CD4-positive, alpha-beta memory T cell (primary cell): ENCODE measurements at regions of chr2 and their contacts with region 1.

Region 1: DNA sequence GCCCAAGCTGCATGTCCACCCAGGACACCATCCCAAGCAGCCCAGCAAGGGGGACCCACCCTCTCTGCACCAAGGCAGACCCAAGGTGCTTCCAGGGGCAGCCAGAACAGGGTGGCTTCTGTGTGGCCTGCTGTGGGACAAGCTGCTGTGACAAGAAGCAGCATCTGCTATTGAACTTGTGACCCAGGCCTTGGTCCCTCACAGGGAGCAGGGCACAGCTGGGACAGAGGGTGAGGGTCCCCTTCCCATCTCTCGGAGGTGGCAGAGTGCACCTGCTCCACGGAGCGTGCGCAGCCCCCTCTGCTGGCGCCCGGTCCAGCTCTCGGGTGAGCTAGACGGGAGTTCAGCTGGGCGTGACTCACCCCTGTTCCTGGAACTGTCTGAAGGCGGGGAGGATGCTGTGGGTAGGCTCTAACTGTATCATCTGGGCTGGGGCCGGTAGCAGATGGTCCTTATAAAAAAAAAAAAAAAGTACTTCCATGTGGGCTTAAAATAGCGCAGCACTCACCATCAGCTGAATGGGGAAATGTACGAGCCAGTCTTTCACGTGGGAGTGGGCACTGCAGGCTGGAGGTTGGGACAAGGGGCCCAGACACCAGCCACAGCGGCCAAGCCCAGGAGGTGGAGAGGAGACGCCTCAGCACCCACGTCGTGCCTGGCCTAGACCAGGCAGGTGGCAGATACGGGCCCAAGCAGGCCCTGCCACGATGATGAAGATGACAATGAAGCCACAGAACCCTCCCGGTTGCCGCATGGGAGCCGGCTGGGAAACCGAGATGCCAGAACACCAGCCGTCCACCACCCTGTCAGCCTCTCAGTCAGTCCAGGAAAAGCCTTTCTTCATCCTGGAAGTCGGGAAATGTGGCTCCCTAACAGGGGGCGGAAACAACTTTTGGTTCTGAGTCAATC is 136.8 kb upstream of the ID2 start:
- DNase-seq: peak; percentile 61 to 90 (median 70)
- H3K4me3 ChIP-seq: no peak overlapping the region
- H3K4me3 Mint-ChIP-seq: peak overlapping the region; percentile 35 to 85 (median 62)
- H3K27ac ChIP-seq: peak overlapping the region; percentile 69
- H3K27ac Mint-ChIP-seq: peak overlapping the region; percentile 76 to 97 (median 94)
- H3K4me1 ChIP-seq: peaks cover 73% of the 10 kb centered on the region
- H3K4me1 Mint-ChIP-seq: peaks cover 48 to 84% (median 61%) of the 10 kb centered on the region in 4 donors
- H3K27me3 ChIP-seq: no peaks in the 10 kb centered on the region
- H3K27me3 Mint-ChIP-seq: no peaks in the 10 kb centered on the region

Region 2: DNA sequence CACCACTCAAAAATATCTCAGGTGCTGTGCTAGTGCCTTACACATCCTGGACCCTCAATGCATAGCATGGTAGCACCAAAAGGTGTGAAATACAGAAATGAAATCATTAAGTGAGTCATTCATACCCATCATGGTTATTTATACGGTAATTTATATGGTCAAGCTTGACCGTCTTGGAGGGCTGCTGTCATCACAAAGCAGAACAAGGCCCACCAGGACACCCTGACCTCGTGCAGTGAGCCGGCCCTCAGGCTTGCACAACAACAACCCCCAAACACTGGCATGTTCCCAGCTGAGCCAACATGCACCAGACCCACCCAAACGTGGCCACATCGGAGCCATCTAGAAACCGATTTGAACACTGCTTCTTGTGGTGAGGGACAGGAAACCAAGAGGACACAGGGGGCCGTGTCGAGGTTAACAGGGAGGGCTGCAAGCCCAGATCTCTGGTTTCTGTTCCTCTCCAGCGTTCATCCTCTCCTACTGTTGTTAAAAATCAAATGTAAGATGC is 241.7 kb before region 1 on chr2:
- CTCF ChIA-PET with region 1: interaction called, 3 read pairs
- POLR2A ChIA-PET with region 1: no interaction called
- intact Hi-C with region 1: loop called (anchors 2 kb)
- DNase-seq: peak; percentile 72 to 82 (median 76)
- H3K4me3 ChIP-seq: peak overlapping the region; percentile 33 to 40
- H3K4me3 Mint-ChIP-seq: peak overlapping the region; percentile 7 to 83 (median 77)
- H3K27ac ChIP-seq: no peak overlapping the region
- H3K27ac Mint-ChIP-seq: peak overlapping the region; percentile 73 to 90 (median 83)
- H3K4me1 ChIP-seq: peaks cover 70% of the 10 kb centered on the region
- H3K4me1 Mint-ChIP-seq: peaks cover 48 to 86% (median 67%) of the 10 kb centered on the region in 4 donors
- H3K27me3 ChIP-seq: no peaks in the 10 kb centered on the region
- H3K27me3 Mint-ChIP-seq: no peaks in the 10 kb centered on the region

Region 3: DNA sequence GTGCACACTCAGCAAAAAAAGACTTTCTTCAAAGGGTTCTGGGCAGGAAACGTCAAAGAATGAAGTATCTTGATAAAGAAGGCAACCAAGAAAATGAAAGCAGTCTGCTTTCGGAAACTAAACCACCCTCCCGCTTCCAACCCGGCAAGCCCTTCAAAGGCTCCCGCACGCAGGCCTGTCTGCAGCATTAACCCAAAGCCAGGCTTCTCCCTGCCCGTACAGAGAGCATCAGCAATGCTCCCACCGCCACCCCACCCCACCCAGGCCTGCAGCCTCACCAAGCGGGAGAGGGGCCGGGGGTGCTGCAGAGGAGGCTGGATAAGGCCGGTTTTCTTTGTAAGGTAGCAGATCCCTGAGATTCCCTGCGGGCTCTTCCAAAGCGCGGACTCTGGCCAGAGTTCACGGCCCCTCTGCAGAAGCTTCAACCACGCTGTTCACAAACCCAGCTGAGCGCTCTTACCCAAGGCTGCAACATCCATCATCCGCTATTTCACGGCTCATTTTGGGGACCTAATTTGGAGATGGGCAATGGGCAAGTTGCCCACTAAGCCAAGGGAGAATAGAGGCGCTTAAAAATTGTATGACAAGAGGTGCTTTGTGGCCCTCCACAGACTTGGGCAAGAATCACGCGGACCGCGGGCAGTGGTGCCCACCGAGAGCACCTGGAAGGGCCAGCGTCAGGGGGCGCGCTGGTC is 88.7 kb before region 1 on chr2:
- CTCF ChIA-PET with region 1: interaction called, 8 read pairs
- POLR2A ChIA-PET with region 1: interaction called, 4 read pairs
- intact Hi-C with region 1: loop called (anchors 1 kb)
- DNase-seq: peak; percentile 65 to 80 (median 74)
- H3K4me3 ChIP-seq: peak overlapping the region; percentile 12 to 45
- H3K4me3 Mint-ChIP-seq: peak overlapping the region; percentile 82 to 95 (median 88)
- H3K27ac ChIP-seq: peak overlapping the region; percentile 61
- H3K27ac Mint-ChIP-seq: peak overlapping the region; percentile 94 to 98 (median 96)
- H3K4me1 ChIP-seq: peaks cover 37% of the 10 kb centered on the region
- H3K4me1 Mint-ChIP-seq: peaks cover 21 to 47% (median 32%) of the 10 kb centered on the region in 4 donors
- H3K27me3 ChIP-seq: no peaks in the 10 kb centered on the region
- H3K27me3 Mint-ChIP-seq: no peaks in the 10 kb centered on the region

Region 4: GRCh38 chr2:8472545-8473323 is 72.3 kb before region 1 on chr2:
- CTCF ChIA-PET with region 1: interaction called, 6 read pairs
- POLR2A ChIA-PET with region 1: interaction called, 22 read pairs
- intact Hi-C with region 1: no loop called
- DNase-seq: peak in 1 of 5 donors; percentile 20
- H3K4me3 ChIP-seq: no peak overlapping the region
- H3K4me3 Mint-ChIP-seq: peak overlapping the region in 7 of 8 donors; percentile 59 to 75 (median 70)
- H3K27ac ChIP-seq: peak overlapping the region; percentile 38
- H3K27ac Mint-ChIP-seq: peak overlapping the region; percentile 80 to 98 (median 91)
- H3K4me1 ChIP-seq: peaks cover 81% of the 10 kb centered on the region
- H3K4me1 Mint-ChIP-seq: peaks cover 53 to 89% (median 78%) of the 10 kb centered on the region in 4 donors
- H3K27me3 ChIP-seq: no peaks in the 10 kb centered on the region
- H3K27me3 Mint-ChIP-seq: no peaks in the 10 kb centered on the region

Region 5: GRCh38 chr2:8477552-8478470 is 67.2 kb before region 1 on chr2:
- CTCF ChIA-PET with region 1: interaction called, 6 read pairs
- POLR2A ChIA-PET with region 1: interaction called, 22 read pairs
- intact Hi-C with region 1: loop called (anchors 2 kb)
- DNase-seq: peak; percentile 55 to 66 (median 60)
- H3K4me3 ChIP-seq: peak overlapping the region; percentile 27 to 41
- H3K4me3 Mint-ChIP-seq: peak overlapping the region; percentile 75 to 94 (median 82)
- H3K27ac ChIP-seq: peak overlapping the region; percentile 70
- H3K27ac Mint-ChIP-seq: peak overlapping the region; percentile 92 to 98 (median 96)
- H3K4me1 ChIP-seq: peaks cover 95% of the 10 kb centered on the region
- H3K4me1 Mint-ChIP-seq: peaks cover 66 to 100% (median 88%) of the 10 kb centered on the region in 4 donors
- H3K27me3 ChIP-seq: no peaks in the 10 kb centered on the region
- H3K27me3 Mint-ChIP-seq: no peaks in the 10 kb centered on the region

Region 6: GRCh38 chr2:8488001-8488738 is 56.9 kb before region 1 on chr2:
- CTCF ChIA-PET with region 1: interaction called, 5 read pairs
- POLR2A ChIA-PET with region 1: interaction called, 29 read pairs
- intact Hi-C with region 1: loop called (anchors 2 kb)
- DNase-seq: peak; percentile 76 to 94 (median 85)
- H3K4me3 ChIP-seq: peak overlapping the region; percentile 50 to 66
- H3K4me3 Mint-ChIP-seq: peak overlapping the region; percentile 82 to 93 (median 88)
- H3K27ac ChIP-seq: peak overlapping the region; percentile 83
- H3K27ac Mint-ChIP-seq: peak overlapping the region; percentile 94 to 100 (median 99)
- H3K4me1 ChIP-seq: peaks cover 73% of the 10 kb centered on the region
- H3K4me1 Mint-ChIP-seq: peaks cover 44 to 79% (median 56%) of the 10 kb centered on the region in 4 donors
- H3K27me3 ChIP-seq: no peaks in the 10 kb centered on the region
- H3K27me3 Mint-ChIP-seq: no peaks in the 10 kb centered on the region

Region 7: DNA sequence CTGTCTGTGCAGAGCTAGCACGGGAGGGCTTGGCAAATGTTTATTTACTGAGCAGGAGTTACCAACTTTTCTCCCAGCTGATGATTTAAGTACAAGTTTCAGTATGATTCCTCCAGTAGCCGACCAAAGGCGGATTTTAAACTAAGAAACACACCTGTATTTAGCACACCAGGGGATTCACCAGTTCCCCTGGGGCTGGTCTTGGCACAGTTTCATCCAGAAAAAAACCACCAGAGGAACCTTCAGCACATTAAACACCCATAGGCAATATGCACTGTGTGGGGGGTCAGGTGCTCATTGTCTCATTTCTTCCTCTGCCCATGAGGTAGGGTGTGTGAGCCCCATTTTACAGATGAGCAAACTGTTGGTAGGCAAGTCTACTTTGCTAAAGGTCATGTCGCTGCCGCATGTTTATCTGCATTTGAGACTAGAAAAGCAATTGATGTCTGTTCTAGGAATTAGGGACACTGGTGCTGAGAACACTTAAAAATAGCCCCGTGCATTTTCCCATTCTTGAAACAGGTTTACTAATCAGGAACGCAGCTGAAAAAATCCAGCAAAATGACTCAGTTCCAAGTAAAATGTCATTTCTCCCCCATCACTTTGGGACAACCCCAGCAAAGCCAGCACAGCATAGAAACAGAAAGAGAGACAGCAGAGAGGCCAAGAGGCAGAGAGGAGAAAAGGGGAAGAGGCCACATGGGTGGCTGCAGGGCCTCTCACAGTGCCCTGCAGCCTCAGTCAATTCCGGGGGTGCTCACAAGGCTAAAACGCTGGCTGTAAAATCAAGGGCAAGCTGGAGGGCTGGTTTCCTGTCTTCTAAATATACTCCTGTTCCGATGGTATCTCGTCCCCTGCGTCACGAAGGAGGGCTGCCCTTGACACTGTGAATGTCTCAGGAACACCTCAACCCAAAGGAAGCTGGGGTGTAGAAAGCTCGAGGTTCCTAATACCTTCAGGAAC is 30.0 kb before region 1 on chr2:
- CTCF ChIA-PET with region 1: interaction called, 6 read pairs
- POLR2A ChIA-PET with region 1: interaction called, 14 read pairs
- intact Hi-C with region 1: no loop called
- DNase-seq: peak; percentile 66 to 83 (median 71)
- H3K4me3 ChIP-seq: no peak overlapping the region
- H3K4me3 Mint-ChIP-seq: peak overlapping the region in 7 of 8 donors; percentile 47 to 68 (median 60)
- H3K27ac ChIP-seq: peak overlapping the region; percentile 65
- H3K27ac Mint-ChIP-seq: peak overlapping the region; percentile 85 to 95 (median 88)
- H3K4me1 ChIP-seq: peaks cover 49% of the 10 kb centered on the region
- H3K4me1 Mint-ChIP-seq: peaks cover 26 to 67% (median 42%) of the 10 kb centered on the region in 4 donors
- H3K27me3 ChIP-seq: no peaks in the 10 kb centered on the region
- H3K27me3 Mint-ChIP-seq: no peaks in the 10 kb centered on the region